ENCODE measurements at regions of chr19 and their contacts with region 1.

Region 1: DNA sequence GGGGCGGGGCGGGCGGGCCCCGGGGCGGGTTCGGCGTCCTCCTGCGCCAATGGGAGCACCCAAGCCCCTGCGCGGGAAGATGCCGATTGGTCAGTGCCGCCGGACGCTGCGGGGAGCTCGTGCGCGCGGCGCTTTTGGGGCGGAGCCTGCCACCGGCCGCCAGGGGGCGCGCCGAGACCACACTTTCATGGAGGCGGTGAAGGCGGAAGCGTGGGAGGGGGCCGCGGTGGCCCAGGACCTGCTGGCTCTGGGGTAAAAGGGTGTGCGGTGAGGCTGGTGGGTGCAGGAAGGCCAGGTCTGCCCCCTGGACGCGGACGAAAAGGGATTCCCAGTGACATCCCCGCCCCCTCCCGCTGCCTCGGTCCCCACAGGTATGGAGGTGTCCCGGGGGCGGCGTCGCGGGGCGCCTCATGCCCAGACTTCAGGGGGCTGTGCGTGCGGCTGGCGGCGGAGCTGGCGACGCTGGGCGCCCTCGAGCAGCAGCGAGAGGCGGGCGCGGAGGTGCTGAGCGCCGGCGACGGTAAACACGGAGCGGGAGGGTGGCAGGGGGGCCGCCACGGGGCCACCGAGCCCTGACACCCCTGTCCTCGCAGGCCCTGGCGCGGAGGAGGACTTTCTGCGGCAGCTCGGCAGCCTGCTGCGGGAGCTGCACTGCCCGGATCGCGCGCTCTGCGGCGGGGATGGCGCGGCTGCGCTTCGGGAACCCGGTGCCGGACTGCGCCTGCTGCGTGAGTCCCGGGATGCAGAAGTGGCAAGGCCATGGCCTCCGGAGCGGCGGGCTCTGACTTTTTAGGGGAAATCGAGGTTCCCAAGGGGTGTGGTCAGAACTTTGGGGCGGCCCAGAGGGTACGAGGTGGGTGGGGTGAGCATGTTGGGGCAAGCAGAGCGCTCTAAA is at the start of gene FAM98C:
- DNase-seq: peak; percentile 96 to 99 (median 99)
- ATAC-seq: peak; percentile 99
- H3K4me3 ChIP-seq: peak within 1 kb of the TSS; percentile 60
- H3K27ac ChIP-seq: peak within 1 kb of the TSS; percentile 1
- H3K4me1 ChIP-seq: no peaks in the 10 kb centered on the region
- H3K27me3 ChIP-seq: no peaks in the 10 kb centered on the region
- total RNA-seq, gene FAM98C: 10.4 to 16.7 (median 13.6) TPM

Region 2: GRCh38 chr19:38514812-38515633 is 111.8 kb after region 1 on chr19:
- intact Hi-C with region 1: loop called in 1 of 4 experiments (anchors 10 kb)
- DNase-seq: peak; percentile 69 to 89 (median 85)
- ATAC-seq: peak; percentile 74 to 82
- H3K4me3 ChIP-seq: no peak overlapping the region
- H3K27ac ChIP-seq: no peak overlapping the region
- H3K4me1 ChIP-seq: no peaks in the 10 kb centered on the region
- H3K27me3 ChIP-seq: no peaks in the 10 kb centered on the region

Region 3: GRCh38 chr19:38619361-38620174 is 216.4 kb after region 1 on chr19:
- intact Hi-C with region 1: loop called in 2 of 4 experiments (anchors 10 kb)
- DNase-seq: no peak
- ATAC-seq: peak in 1 of 2 donors; percentile 25
- H3K4me3 ChIP-seq: peak overlapping the region; percentile 86
- H3K27ac ChIP-seq: peak overlapping the region; percentile 92
- H3K4me1 ChIP-seq: peaks cover 9% of the 10 kb centered on the region
- H3K27me3 ChIP-seq: no peaks in the 10 kb centered on the region

Region 4: DNA sequence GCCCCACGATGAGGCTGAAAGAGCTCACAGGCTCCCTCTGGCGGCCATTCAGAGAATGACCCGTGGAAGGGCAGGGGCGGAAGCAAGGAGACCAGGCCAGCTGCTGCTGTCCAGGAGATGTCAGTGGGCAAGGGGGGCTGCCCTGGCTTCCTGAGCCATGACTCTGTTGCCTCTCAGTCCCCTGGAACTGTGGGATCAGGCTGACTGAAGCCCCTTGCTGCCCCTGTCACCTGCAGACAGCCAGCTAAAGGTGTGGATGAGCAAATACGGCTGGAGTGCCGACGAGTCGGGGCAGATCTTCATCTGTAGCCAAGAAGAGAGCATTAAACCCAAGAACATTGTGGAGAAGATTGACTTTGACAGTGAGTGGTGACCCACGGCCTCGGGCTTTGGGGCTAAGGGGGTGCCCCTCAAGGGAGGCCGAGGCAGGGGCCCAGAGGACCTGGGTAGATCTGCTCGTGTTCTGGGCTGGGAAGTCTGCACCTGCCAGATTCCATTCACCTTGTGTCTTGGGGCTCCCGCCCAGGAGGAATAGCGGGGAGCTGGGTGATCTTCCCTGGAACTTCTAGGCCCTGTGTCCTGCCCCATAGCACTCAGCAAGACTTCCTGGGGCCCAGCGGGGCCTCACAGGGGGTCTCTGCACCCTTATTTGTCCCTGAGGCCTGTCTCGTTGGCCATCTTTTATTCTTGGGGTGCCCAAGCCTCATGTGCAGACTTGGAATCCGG is 231.7 kb after region 1 on chr19:
- intact Hi-C with region 1: loop called in 2 of 4 experiments (anchors 5 to 10 kb)
- DNase-seq: peak; percentile 72 to 92 (median 89)
- ATAC-seq: peak; percentile 24 to 32
- H3K4me3 ChIP-seq: no peak overlapping the region
- H3K27ac ChIP-seq: peak overlapping the region; percentile 72
- H3K4me1 ChIP-seq: no peaks in the 10 kb centered on the region
- H3K27me3 ChIP-seq: no peaks in the 10 kb centered on the region